Common myeloid progenitor, CD34-positive (primary cell): ENCODE measurements at regions of chr12 and their contacts with region 1.

Region 1: GRCh38 chr12:2752676-2753371 is 41.9 kb upstream of the FKBP4 start:
- DNase-seq: peak; percentile 80 to 91 (median 90)
- H3K4me3 ChIP-seq: no peak overlapping the region
- H3K27ac ChIP-seq: no peak overlapping the region
- H3K4me1 ChIP-seq: peaks cover 0 to 6% (median 4%) of the 10 kb centered on the region in 4 experiments
- H3K27me3 ChIP-seq: peaks cover 3 to 36% (median 10%) of the 10 kb centered on the region in 5 experiments

Region 2: GRCh38 chr12:2682296-2683251 is 70.2 kb before region 1 on chr12:
- CTCF ChIA-PET with region 1: interaction called, 14 read pairs
- POLR2A ChIA-PET with region 1: no interaction called
- DNase-seq: peak; percentile 80 to 94 (median 91)
- H3K4me3 ChIP-seq: no peak overlapping the region
- H3K27ac ChIP-seq: no peak overlapping the region
- H3K4me1 ChIP-seq: peaks cover 3 to 20% (median 16%) of the 10 kb centered on the region in 4 experiments
- H3K27me3 ChIP-seq: no peaks in the 10 kb centered on the region

Region 3: DNA sequence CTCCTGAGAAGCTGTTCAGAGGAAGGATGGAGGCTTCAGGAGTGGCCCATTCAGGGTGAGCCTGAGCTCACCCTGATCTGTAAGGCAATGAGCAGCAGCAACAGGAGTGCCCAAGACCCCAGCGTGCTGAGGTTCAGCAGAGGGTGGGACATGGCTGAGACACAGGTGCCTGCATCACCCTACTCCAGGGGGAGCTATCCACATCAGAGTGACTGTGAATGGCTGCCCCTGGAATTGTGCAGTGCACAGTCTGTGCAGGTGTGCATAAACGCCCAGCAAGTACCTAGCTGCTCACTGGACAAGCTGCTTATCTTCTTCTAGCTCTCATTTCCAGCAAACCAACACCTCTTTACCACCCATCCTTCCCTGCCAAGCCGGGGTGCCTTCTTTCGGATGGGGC is 597.6 kb after region 1 on chr12:
- CTCF ChIA-PET with region 1: no interaction called
- POLR2A ChIA-PET with region 1: no interaction called
- DNase-seq: no peak
- H3K4me3 ChIP-seq: no peak overlapping the region
- H3K27ac ChIP-seq: no peak overlapping the region
- H3K4me1 ChIP-seq: no peaks in the 10 kb centered on the region
- H3K27me3 ChIP-seq: peaks cover 4 to 33% (median 10%) of the 10 kb centered on the region in 5 experiments